CD8-positive, alpha-beta T cell (primary cell): ENCODE measurements at regions of chr7 and their contacts with region 1.

Region 1: DNA sequence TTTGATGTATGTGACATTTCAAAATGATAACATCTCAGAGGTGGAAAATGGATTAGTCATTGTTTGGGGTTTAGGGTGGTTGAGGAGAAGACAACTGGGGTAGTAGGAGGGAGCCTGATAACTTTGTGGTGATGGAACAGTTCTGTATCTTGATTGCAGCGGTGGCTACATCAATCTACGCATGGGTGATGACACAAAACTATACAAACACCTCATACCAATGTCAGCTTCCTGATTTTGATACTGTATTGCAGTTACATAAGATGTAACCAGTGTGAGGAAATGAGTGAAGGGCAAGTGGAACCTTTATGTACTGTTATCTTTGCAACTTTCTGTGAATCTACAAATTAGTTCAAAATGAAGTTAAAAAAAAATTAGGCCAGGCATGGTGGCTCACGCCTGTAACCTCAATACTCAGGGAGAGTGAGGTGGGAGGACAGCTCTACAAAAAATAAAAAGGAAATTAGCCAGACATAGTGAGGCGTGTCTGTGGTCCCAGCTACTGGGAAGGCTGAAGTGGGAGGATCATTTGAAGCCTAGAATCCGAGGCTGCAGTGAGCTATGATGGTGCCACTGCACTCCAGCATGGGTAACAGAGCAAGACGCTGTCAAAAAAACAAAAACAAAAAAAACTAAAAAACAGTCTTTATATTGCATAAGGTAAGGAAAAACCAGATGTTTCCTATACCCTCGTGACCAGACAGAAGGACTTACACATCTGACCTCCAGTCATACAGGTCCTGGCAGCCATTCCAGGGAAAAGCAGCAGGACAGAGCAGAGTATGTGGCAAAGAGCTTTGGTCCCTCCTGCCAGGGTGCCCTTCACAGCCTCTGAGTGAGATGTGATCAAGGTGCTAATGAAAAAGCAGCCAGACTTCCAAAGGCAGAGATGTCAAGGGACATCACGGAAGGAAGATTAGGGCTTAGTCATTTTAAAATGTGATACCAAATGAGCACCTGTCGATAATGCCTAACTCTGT is 50.8 kb downstream of the CYTH3 start:
- DNase-seq: peak in 5 of 9 experiments; percentile 13 to 79 (median 45)
- ATAC-seq: peak; percentile 85
- H3K4me3 ChIP-seq: no peak overlapping the region
- H3K4me3 Mint-ChIP-seq: no peak overlapping the region
- H3K27ac ChIP-seq: peak overlapping the region in 1 of 2 experiments; percentile 47
- H3K27ac Mint-ChIP-seq: peak overlapping the region; percentile 86
- H3K4me1 ChIP-seq: no peaks in the 10 kb centered on the region
- H3K4me1 Mint-ChIP-seq: peaks cover 14% of the 10 kb centered on the region
- H3K27me3 ChIP-seq: no peaks in the 10 kb centered on the region
- H3K27me3 Mint-ChIP-seq: no peaks in the 10 kb centered on the region
- CTCF ChIP-seq: no peak

Region 2: DNA sequence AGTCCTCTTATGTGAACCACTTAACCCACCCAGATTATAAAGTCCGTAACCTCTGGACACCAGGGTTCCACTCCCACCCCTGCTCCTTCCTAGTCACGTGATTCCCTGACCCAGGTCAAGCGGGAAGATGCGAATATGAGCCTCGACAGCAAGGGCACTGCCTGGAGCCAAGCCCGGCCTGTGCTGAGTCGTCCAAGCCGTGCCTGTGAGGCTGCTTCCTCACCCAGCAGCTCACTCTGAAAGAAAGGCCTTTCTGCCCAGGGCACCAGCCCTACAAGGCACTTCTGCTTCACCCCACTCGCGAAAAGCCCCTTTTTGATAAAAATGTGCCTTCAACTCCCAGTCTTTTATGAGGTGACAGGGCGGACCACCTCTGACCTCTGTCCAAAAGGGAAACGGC is 35.0 kb before region 1 on chr7:
- CTCF ChIA-PET with region 1: no interaction called
- POLR2A ChIA-PET with region 1: no interaction called
- intact Hi-C with region 1: loop called in 1 of 2 experiments (anchors 1 kb)
- DNase-seq: no peak
- ATAC-seq: no peak
- H3K4me3 ChIP-seq: no peak overlapping the region
- H3K4me3 Mint-ChIP-seq: no peak overlapping the region
- H3K27ac ChIP-seq: no peak overlapping the region
- H3K27ac Mint-ChIP-seq: no peak overlapping the region
- H3K4me1 ChIP-seq: no peaks in the 10 kb centered on the region
- H3K4me1 Mint-ChIP-seq: no peaks in the 10 kb centered on the region
- H3K27me3 ChIP-seq: no peaks in the 10 kb centered on the region
- H3K27me3 Mint-ChIP-seq: no peaks in the 10 kb centered on the region
- CTCF ChIP-seq: no peak

Region 3: DNA sequence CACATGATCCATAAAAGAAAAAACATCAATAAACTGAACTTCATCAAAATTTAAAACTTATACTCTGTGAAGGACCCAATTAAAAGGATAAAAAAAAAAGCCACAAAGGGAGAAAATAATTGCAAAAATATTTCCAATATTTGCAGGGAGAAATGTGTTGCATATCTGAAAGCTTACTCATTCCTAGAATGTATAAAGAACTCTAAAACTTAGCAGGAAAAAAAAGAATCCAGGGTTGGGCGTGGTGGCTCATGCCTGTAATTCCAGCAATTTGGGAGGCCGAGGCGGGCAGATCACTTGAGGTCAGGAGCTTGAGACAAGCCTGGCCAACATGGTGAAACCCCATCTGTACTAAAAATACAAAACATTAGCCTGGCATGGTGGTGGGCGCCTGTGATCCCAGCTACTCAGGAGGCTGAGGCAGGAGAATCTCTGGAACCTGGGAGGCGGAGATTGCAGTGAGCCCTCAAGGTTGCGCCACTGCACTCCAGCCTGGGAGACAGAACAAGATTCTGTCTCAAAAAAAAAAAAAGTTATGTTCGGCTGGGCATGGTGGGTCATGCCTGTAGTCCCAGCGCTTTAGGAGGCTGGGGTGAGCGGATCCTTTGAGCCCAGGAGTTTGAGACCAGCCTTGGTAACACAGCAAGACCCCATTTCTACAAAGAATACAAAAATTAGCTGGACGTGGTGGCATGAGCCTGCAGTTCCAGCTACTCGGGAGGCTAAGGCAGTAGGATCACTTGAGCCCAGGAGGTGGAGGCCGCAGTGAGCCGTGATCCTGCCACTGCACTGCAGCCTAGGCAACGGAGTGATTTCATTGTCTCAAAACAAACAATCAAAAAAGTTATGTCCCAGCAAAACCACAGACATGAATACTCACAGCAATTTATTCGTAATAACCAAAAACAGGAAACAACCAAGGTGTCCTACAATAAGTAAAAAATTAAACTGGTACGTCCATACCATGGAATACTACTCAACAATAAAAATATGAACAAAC is 62.1 kb after region 1 on chr7:
- CTCF ChIA-PET with region 1: no interaction called
- POLR2A ChIA-PET with region 1: no interaction called
- intact Hi-C with region 1: no loop called
- DNase-seq: no peak
- ATAC-seq: no peak
- H3K4me3 ChIP-seq: no peak overlapping the region
- H3K4me3 Mint-ChIP-seq: no peak overlapping the region
- H3K27ac ChIP-seq: no peak overlapping the region
- H3K27ac Mint-ChIP-seq: no peak overlapping the region
- H3K4me1 ChIP-seq: no peaks in the 10 kb centered on the region
- H3K4me1 Mint-ChIP-seq: no peaks in the 10 kb centered on the region
- H3K27me3 ChIP-seq: no peaks in the 10 kb centered on the region
- H3K27me3 Mint-ChIP-seq: no peaks in the 10 kb centered on the region
- CTCF ChIP-seq: no peak